Heart left ventricle (tissue), 16 donors: ENCODE measurements at regions of chr17 and their contacts with region 1.

Region 1: GRCh38 chr17:42517516-42517915 is 18.5 kb upstream of the NAGLU start:
- DNase-seq: peak; percentile 83 to 92 (median 86)
- ATAC-seq: peak; percentile 19 to 66 (median 48)
- H3K4me3 ChIP-seq: peak overlapping the region in 1 of 12 donors; percentile 5
- H3K27ac ChIP-seq: peak overlapping the region; percentile 84 to 97 (median 92)
- H3K4me1 ChIP-seq: peaks cover 23 to 85% (median 68%) of the 10 kb centered on the region in 12 donors
- H3K27me3 ChIP-seq: no peaks in the 10 kb centered on the region
- CTCF ChIP-seq: peak; percentile 85 to 96 (median 92)
- POLR2A ChIP-seq: no peak

Region 2: GRCh38 chr17:42120770-42121769 is 396.4 kb before region 1 on chr17 and contains the start of gene KAT2A:
- intact Hi-C with region 1: loop called in 1 of 10 experiments (anchors 10 kb)
- DNase-seq: peak; percentile 83 to 91 (median 86)
- ATAC-seq: peak; percentile 73 to 93 (median 92)
- H3K4me3 ChIP-seq: peak within 1 kb of the TSS; percentile 43 to 97 (median 78)
- H3K27ac ChIP-seq: peak within 1 kb of the TSS in 11 of 12 donors; percentile 24 to 80 (median 71)
- H3K4me1 ChIP-seq: peaks cover 0 to 29% (median 16%) of the 10 kb centered on the region in 12 donors
- H3K27me3 ChIP-seq: no peaks in the 10 kb centered on the region
- CTCF ChIP-seq: no peak
- POLR2A ChIP-seq: peak in 1 of 2 donors; percentile 51
- total RNA-seq, gene KAT2A: 6.9 to 17.6 (median 14.8) TPM

Region 3: GRCh38 chr17:42322382-42323267 is 194.9 kb before region 1 on chr17:
- intact Hi-C with region 1: loop called in 8 of 10 experiments (anchors 2 to 10 kb)
- DNase-seq: peak; percentile 90 to 94 (median 92)
- ATAC-seq: peak; percentile 60 to 80 (median 78)
- H3K4me3 ChIP-seq: no peak overlapping the region
- H3K27ac ChIP-seq: peak overlapping the region in 4 of 12 donors; percentile 9 to 47 (median 26)
- H3K4me1 ChIP-seq: peaks cover 0 to 38% (median 17%) of the 10 kb centered on the region in 12 donors
- H3K27me3 ChIP-seq: no peaks in the 10 kb centered on the region
- CTCF ChIP-seq: peak; percentile 97 to 100 (median 100)
- POLR2A ChIP-seq: no peak

Region 4: DNA sequence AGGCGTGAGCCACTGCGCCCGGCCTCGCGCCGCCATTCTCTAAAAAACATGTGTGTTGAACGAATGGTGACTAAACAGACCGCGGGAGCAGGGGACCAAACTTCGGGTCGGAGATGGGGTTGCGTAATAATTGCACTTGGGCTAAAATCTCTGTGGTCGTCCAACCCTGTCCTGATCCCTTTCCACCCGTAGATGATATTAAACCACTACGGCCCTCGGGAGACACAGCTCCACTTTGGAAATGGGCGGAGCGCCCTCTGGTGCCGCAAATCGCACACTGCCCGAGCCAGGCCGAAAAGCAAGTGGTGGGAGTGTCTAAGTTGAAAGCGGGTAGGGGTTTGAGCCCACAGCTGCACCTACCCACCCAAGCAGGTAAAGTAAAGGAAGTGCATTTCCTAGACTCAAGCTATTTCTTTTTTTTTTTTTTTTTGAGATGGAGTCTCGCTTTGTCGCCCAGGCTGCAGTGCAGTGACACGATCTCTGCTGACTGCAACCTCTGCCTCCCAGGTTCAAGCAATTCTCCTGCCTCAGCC is 111.5 kb before region 1 on chr17:
- intact Hi-C with region 1: loop called in 2 of 10 experiments (anchors 2 to 5 kb)
- DNase-seq: peak; percentile 83 to 92 (median 83)
- ATAC-seq: peak; percentile 56 to 73 (median 68)
- H3K4me3 ChIP-seq: peak overlapping the region in 7 of 12 donors; percentile 8 to 33 (median 20)
- H3K27ac ChIP-seq: peak overlapping the region; percentile 65 to 100 (median 82)
- H3K4me1 ChIP-seq: peaks cover 27 to 93% (median 79%) of the 10 kb centered on the region in 12 donors
- H3K27me3 ChIP-seq: no peaks in the 10 kb centered on the region
- CTCF ChIP-seq: peak; percentile 77 to 92 (median 84)
- POLR2A ChIP-seq: no peak

Region 5: DNA sequence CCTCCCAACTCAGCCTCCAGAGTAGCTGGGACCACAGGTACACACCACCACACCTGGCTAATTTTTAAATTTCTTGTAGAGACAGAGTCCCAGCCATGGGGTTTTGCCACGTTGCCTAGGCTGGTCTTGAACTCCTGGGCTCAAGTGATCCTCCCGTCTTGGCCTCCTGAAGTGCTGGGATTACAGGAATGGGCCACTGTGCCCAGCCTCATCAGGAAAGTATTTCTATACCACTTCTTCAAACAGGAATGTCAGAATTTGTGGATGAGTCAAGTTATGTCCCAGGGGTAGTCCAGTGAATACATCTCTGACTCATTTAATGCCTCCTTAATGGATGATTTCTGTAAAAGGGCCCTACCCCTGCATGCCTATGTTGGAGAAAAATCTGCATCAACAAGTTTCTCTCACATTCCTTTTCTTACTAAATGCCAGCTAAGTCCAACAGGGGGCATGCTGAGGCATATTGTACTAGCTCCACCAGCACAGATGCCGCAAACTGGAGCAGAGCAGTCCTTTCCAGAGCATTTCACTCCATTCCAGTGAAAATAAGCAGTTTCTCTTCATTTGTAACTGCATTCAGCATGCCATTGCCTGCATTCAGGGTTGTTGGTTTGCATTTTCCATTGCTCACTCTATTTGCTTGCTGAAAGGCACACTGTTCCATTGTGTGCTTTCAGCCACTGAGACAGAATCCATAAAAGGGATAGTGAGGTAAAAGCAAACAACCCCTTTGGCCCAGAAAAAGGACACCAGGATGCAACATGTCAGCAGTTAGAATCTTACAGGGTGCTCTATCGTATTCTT is 89.2 kb before region 1 on chr17:
- intact Hi-C with region 1: loop called in 7 of 10 experiments (anchors 5 to 10 kb)
- DNase-seq: peak in 1 of 5 donors; percentile 53
- ATAC-seq: peak in 3 of 4 donors; percentile 51 to 71 (median 60)
- H3K4me3 ChIP-seq: peak overlapping the region in 1 of 12 donors; percentile 5
- H3K27ac ChIP-seq: peak overlapping the region in 2 of 12 donors; percentile 20 to 31
- H3K4me1 ChIP-seq: peaks cover 0 to 44% (median 14%) of the 10 kb centered on the region in 12 donors
- H3K27me3 ChIP-seq: peaks cover 0 to 5% (median 0%) of the 10 kb centered on the region in 9 donors
- CTCF ChIP-seq: peak; percentile 40 to 72 (median 58)
- POLR2A ChIP-seq: no peak

Region 6: DNA sequence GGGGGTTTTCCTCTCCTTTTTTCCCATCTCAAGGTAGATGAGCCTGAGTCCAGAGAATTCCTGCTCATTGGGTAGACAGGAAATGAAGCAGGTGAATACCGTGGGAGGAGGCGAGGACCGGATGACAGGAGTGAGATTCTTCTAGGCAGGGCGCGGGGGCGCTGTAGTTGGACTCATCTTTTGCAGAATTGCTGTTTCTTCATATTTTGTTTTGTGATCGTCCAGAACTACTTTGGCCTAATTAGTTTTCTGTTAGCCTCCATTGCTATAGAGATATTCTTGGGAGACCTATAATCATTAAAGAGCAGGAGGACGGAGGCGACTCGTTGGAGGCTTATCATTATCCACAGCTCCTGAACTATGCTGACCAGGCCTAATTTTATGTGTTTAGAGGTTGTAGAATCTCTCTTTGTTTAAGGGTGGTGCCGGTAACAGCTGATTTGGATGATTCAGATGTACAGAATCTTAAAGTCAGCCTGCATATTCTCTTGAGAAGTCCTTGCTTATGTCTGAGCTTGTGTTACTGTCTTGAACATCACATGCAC is 58.2 kb before region 1 on chr17:
- intact Hi-C with region 1: loop called in 3 of 10 experiments (anchors 5 to 10 kb)
- DNase-seq: peak in 4 of 5 donors; percentile 38 to 55 (median 45)
- ATAC-seq: peak; percentile 33 to 53 (median 42)
- H3K4me3 ChIP-seq: peak overlapping the region; percentile 43 to 93 (median 80)
- H3K27ac ChIP-seq: peak overlapping the region; percentile 77 to 98 (median 92)
- H3K4me1 ChIP-seq: peaks cover 0 to 73% (median 25%) of the 10 kb centered on the region in 12 donors
- H3K27me3 ChIP-seq: no peaks in the 10 kb centered on the region
- CTCF ChIP-seq: peak in 7 of 12 donors; percentile 6 to 51 (median 42)
- POLR2A ChIP-seq: no peak

Region 7: GRCh38 chr17:42475835-42476234 is 41.7 kb before region 1 on chr17:
- intact Hi-C with region 1: loop called in 1 of 10 experiments (anchors 5 kb)
- DNase-seq: no peak
- ATAC-seq: peak in 2 of 4 donors; percentile 14 to 24
- H3K4me3 ChIP-seq: no peak overlapping the region
- H3K27ac ChIP-seq: peak overlapping the region in 3 of 12 donors; percentile 11 to 81 (median 14)
- H3K4me1 ChIP-seq: peaks cover 0 to 30% (median 0%) of the 10 kb centered on the region in 12 donors
- H3K27me3 ChIP-seq: no peaks in the 10 kb centered on the region
- CTCF ChIP-seq: no peak
- POLR2A ChIP-seq: no peak